PC-9 (cell line): ENCODE measurements at regions of chr15 and their contacts with region 1.

Region 1: GRCh38 chr15:92889390-92890107 is 10.6 kb upstream of the CHD2 start:
- DNase-seq: no peak
- H3K4me3 ChIP-seq: no peak overlapping the region
- H3K27ac ChIP-seq: 0 out of 2 replicates have a peak overlapping the region, but pooled peaks have one; percentile 12
- H3K4me1 ChIP-seq: peaks cover 26% of the 10 kb centered on the region
- H3K27me3 ChIP-seq: no peaks in the 10 kb centered on the region; the same call in 1 of the 2 replicates
- CTCF ChIP-seq: no peak

Region 2: GRCh38 chr15:92733934-92734521 is 155.5 kb before region 1 on chr15:
- CTCF ChIA-PET with region 1: no interaction called
- POLR2A ChIA-PET with region 1: no interaction called
- intact Hi-C with region 1: no loop called
- DNase-seq: no peak
- H3K4me3 ChIP-seq: no peak overlapping the region
- H3K27ac ChIP-seq: no peak overlapping the region
- H3K4me1 ChIP-seq: no peaks in the 10 kb centered on the region
- H3K27me3 ChIP-seq: no peaks in the 10 kb centered on the region
- CTCF ChIP-seq: no peak

Region 3: DNA sequence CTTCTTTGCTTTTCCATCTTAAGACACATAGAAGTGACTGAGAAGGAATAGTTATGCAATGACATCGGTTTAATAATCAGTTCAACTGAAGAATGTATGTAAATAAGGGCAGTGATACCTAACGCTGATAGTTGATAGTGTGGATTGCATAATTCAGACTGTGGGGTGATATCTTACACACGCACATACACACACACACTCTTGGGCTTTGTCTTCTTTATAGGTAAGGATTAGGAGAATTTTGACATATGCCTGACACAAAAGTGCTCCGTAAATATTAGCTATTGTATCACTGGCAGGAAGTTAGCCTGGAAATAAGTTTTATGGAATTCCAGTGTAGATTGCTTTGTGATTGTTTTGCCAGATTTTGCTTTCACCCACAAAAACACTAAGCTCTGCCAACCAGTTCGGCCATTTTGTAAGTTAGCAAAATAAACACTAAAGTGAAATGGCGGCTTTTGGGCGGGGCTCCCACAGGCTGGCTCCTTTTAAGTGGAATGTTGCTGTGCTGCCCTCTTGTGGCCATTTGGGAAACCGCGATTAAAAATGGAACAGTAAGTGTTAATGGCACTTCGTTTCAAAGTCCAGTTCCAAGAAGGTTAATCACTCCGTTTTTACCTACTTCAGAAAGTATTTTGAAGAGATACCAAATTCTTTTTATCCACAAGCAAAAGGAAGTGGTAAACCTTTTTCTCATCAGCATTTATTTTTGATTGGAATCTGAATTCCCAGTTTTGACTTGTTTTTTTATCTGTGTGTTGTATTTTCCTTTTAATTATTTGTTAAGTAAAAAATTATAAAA is 28.3 kb after region 1 on chr15:
- CTCF ChIA-PET with region 1: no interaction called
- POLR2A ChIA-PET with region 1: interaction called, 7 read pairs
- intact Hi-C with region 1: loop called (anchors 2 kb)
- DNase-seq: peak; percentile 88 to 94
- H3K4me3 ChIP-seq: peak overlapping the region; percentile 42; the same call in 1 of the 2 replicates
- H3K27ac ChIP-seq: peak overlapping the region; percentile 97
- H3K4me1 ChIP-seq: peaks cover 97% of the 10 kb centered on the region
- H3K27me3 ChIP-seq: no peaks in the 10 kb centered on the region
- CTCF ChIP-seq: peak; percentile 91